H1 (cell line): ENCODE measurements at regions of chr20 and their contacts with region 1.

Region 1: GRCh38 chr20:61628901-61629601 is 377.0 kb downstream of the CDH4 start:
- DNase-seq: no peak
- H3K4me3 ChIP-seq: no peak overlapping the region
- H3K27ac ChIP-seq: no peak overlapping the region
- H3K4me1 ChIP-seq: no peaks in the 10 kb centered on the region
- H3K27me3 ChIP-seq: peaks cover 0 to 2% (median under 1%) of the 10 kb centered on the region in 4 experiments; a peak in 3 of 7 replicates
- CTCF ChIP-seq: no peak
- EP300 ChIP-seq: no peak
- POLR2A ChIP-seq: no peak
- RAD21 ChIP-seq: no peak

Region 2: DNA sequence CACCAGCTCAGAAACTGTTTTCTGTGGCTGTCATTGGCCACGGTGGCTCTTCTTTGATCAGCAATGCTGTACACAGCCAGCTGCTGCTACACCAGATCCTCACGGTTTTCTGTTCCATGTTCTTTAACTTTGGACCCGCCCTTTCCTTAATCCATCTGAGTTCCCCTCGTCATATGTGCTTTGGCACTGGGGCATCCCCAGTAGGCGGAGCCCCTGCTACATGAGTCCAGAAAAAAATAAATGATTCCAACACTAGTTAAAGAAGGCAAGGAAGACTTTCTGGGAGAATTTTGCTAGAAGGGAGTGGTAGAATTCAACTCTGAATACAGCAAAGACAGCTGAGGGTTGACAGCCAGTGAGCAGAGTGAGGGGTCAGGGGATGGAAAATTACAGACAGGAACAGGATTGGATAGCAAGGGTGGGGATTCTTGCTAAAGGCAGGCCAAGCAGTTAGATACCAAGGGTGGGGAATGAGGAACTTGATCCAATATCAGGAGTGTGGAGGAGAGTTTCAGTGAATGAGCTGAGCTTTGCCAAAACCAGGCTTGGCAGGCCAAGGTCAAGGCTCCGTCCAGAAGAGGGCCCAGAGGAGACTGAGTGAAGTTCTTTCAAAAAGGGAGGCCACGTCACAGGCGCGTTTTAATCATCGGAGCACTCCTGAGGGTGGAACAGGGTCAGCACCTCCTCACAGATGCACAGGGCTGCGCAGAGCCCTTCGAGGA is 14.8 kb after region 1 on chr20:
- CTCF ChIA-PET with region 1: interaction called, 11 read pairs
- POLR2A ChIA-PET with region 1: no interaction called
- DNase-seq: no peak
- H3K4me3 ChIP-seq: no peak overlapping the region
- H3K27ac ChIP-seq: no peak overlapping the region
- H3K4me1 ChIP-seq: peaks cover 0 to 3% (median 2%) of the 10 kb centered on the region in 4 experiments; a peak in 3 of 7 replicates
- H3K27me3 ChIP-seq: peaks cover 0 to 3% (median 0%) of the 10 kb centered on the region in 4 experiments; a peak in 3 of 7 replicates
- CTCF ChIP-seq: no peak
- EP300 ChIP-seq: no peak
- POLR2A ChIP-seq: no peak
- RAD21 ChIP-seq: no peak